ENCODE measurements at regions of chr1 and their contacts with region 1.

Region 1: DNA sequence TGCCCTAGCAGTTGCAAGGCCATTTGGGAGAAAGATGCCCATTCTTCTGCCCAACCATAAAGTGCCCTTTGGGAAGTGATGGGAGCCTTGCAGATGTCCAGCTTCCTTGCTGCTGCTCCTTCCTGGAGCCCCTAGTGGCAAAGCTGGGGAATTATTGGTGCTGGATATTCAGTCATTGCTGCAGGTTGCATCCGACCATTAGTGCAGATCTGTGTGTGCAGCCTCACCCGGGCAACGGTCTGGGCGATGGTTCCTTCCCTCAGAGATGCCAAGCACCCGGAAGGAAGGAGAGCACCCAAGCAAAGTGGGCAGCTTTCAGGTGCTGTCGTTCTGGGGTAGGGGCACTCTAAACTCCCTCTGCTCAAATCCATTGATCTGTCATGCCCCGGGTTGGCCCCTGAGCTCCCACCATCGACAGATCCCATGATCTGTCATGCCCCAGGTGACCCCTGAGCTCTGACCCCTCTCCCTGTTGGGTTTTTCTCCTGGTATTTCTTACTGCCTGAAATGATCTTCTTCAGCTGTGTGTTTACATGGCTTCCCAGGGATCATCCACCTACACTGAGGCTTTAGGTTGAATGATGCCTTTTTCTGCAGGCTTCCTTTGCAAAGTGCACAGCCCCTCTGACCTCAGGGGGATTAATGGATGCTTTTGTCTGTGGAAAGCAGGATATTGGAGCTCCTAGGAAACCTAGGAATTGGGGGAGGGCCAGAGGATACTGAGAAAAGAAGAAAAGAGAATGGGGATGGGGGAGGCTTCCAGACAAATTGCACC is 467.5 kb downstream of the PTPRU start:
- DNase-seq: peak; percentile 45
- H3K4me3 ChIP-seq: no peak overlapping the region
- H3K27ac ChIP-seq: no peak overlapping the region
- H3K4me1 ChIP-seq: peaks cover 16% of the 10 kb centered on the region
- H3K27me3 ChIP-seq: no peaks in the 10 kb centered on the region
- CTCF ChIP-seq: peak; percentile 91 to 95

Region 2: DNA sequence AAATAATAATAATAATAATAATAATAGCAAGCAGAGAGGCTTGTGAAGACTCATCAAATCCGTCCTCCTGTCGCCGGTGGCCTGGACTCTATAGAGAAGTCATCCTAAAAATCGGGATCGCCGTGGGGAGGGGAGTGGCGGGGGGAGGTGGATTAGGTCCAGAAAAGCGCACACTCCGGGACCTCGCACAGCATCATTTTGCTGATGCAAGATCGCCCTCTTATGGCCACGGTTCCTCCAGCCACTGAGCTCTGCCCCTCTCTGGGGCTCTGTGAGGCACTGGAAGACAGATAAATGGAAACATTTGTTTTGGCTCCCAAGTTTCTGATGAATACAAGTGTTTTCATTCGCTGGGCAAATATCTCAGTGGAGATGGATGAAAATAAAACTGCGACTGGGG is 407.6 kb after region 1 on chr1:
- CTCF ChIA-PET with region 1: no interaction called
- dilution Hi-C with region 1: no loop called
- in situ Hi-C with region 1: no loop called
- intact Hi-C with region 1: loop called (anchors 5 kb)
- DNase-seq: peak; percentile 16
- H3K4me3 ChIP-seq: no peak overlapping the region
- H3K27ac ChIP-seq: no peak overlapping the region
- H3K4me1 ChIP-seq: no peaks in the 10 kb centered on the region
- H3K27me3 ChIP-seq: no peaks in the 10 kb centered on the region
- CTCF ChIP-seq: peak; percentile 43 to 69

Region 3: GRCh38 chr1:30379684-30380624 is 676.2 kb after region 1 on chr1:
- CTCF ChIA-PET with region 1: interaction called, 3 read pairs
- dilution Hi-C with region 1: no loop called
- in situ Hi-C with region 1: no loop called
- intact Hi-C with region 1: loop called (anchors 5 kb)
- DNase-seq: peak; percentile 68
- H3K4me3 ChIP-seq: no peak overlapping the region
- H3K27ac ChIP-seq: no peak overlapping the region
- H3K4me1 ChIP-seq: peaks cover 23% of the 10 kb centered on the region
- H3K27me3 ChIP-seq: no peaks in the 10 kb centered on the region
- CTCF ChIP-seq: peak; percentile 89 to 93

Region 4: DNA sequence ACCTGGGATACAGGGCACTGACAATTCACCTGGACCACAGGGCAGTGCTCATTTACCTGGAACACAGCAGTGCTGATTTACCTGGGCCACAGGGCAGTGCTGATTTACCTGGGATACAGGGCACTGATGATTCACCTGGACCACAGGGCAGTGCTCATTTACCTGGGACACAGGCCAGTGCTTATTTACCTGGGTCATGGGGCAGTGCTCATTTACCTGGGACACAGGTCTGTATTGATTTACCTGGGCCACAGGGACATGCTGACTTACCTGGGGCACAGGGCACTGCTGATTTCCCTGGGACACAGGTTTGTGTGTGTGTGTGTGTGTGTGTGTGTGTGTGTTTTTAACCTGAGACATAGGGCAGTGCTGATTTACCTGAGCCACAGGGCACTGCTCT is 757.9 kb after region 1 on chr1:
- CTCF ChIA-PET with region 1: no interaction called
- dilution Hi-C with region 1: no loop called
- in situ Hi-C with region 1: no loop called
- intact Hi-C with region 1: no loop called
- DNase-seq: no peak
- H3K4me3 ChIP-seq: no peak overlapping the region
- H3K27ac ChIP-seq: no peak overlapping the region
- H3K4me1 ChIP-seq: no peaks in the 10 kb centered on the region
- H3K27me3 ChIP-seq: no peaks in the 10 kb centered on the region
- CTCF ChIP-seq: no peak